ENCODE measurements at regions of chr2 and their contacts with region 1.

Region 1: GRCh38 chr2:238636269-238637073 is 209.7 kb downstream of the ASB1 start:
- DNase-seq: no peak
- H3K4me3 ChIP-seq: no peak overlapping the region
- H3K27ac ChIP-seq: no peak overlapping the region
- H3K4me1 ChIP-seq: no peaks in the 10 kb centered on the region
- H3K27me3 ChIP-seq: no peaks in the 10 kb centered on the region
- CTCF ChIP-seq: no peak

Region 2: GRCh38 chr2:238569507-238570195 is 66.8 kb before region 1 on chr2:
- CTCF ChIA-PET with region 1: no interaction called
- dilution Hi-C with region 1: loop called (anchors 5 kb)
- in situ Hi-C with region 1: no loop called
- intact Hi-C with region 1: no loop called
- DNase-seq: no peak
- H3K4me3 ChIP-seq: no peak overlapping the region
- H3K27ac ChIP-seq: no peak overlapping the region
- H3K4me1 ChIP-seq: no peaks in the 10 kb centered on the region
- H3K27me3 ChIP-seq: no peaks in the 10 kb centered on the region
- CTCF ChIP-seq: no peak

Region 3: DNA sequence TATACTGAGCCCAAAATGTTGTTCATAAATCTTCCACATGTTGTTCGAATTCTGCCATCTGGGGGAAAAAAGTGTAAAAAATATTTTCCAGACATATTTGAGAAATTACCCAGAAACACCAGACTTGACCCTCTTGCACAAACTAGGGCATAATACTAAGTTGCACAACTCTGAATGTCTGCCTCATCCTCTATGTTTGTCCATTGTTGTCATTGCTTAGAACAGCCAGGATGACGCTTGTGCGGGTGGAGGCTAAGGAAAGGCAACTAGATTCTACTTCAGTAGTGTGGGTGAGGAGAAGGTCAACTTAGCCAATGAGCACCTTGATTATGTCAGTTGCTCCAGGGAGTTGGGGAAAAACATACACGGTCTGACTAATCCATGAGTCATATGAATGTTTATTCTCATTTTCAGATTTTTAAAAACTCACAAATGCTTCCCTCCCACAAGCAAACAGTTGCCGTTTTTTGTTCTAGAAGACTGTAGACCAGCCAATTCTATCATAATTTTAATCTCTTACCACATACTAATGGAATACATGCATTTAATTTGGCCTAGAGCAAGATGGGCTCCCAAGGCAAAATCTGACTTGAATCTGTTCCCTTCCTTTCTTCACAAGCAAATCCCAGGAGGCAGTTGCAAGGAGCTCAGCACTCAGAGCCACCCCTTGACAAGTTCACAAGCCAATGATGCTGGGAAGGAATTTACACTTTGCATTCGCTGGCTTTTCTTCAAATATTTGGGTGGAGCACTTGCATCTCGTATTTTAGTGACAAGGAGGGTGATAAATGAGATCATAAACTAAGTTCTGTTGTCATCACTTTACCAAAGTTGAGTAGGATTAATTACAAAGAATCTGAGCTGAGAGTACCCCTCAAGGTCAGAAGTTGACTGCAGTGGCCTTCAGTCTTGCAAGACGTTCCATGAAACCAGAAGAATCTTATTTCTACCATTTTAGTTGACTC is 48.2 kb after region 1 on chr2:
- CTCF ChIA-PET with region 1: no interaction called
- dilution Hi-C with region 1: no loop called
- in situ Hi-C with region 1: no loop called
- intact Hi-C with region 1: loop called (anchors 5 kb)
- DNase-seq: peak; percentile 99
- H3K4me3 ChIP-seq: no peak overlapping the region
- H3K27ac ChIP-seq: peak overlapping the region; percentile 82
- H3K4me1 ChIP-seq: peaks cover 20% of the 10 kb centered on the region
- H3K27me3 ChIP-seq: no peaks in the 10 kb centered on the region
- CTCF ChIP-seq: no peak

Region 4: DNA sequence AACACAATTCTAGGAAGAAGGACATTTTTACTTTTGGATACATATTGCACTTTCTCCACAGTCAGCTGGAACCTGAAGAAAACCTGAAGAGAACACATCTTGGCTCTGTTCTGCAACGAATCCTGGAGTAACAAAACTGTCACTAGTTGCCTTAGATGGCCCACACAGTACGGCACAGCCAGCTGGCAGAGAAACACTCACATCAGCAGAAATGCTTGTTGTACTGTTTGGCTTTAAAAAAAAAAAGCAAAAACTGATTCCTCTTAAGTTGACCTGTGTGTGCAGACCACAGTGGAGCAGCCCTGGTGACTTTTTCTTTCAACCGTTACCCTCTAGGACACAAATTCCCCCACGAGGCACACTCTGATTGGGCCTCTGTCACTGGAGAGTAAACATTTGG is 59.1 kb after region 1 on chr2:
- CTCF ChIA-PET with region 1: no interaction called
- dilution Hi-C with region 1: loop called (anchors 5 kb)
- in situ Hi-C with region 1: no loop called
- intact Hi-C with region 1: no loop called
- DNase-seq: no peak
- H3K4me3 ChIP-seq: no peak overlapping the region
- H3K27ac ChIP-seq: no peak overlapping the region
- H3K4me1 ChIP-seq: no peaks in the 10 kb centered on the region
- H3K27me3 ChIP-seq: no peaks in the 10 kb centered on the region
- CTCF ChIP-seq: no peak

Measured in mammary epithelial cell (primary cell).